Activated naive CD4-positive, alpha-beta T cell treated with anti-CD3 and anti-CD28 coated beads, Interleukin-2, amount 10 ng/mL, durations not matched to agents 7 days and 5 days (primary cell): ENCODE measurements at regions of chr17 and their contacts with region 1.

Region 1: DNA sequence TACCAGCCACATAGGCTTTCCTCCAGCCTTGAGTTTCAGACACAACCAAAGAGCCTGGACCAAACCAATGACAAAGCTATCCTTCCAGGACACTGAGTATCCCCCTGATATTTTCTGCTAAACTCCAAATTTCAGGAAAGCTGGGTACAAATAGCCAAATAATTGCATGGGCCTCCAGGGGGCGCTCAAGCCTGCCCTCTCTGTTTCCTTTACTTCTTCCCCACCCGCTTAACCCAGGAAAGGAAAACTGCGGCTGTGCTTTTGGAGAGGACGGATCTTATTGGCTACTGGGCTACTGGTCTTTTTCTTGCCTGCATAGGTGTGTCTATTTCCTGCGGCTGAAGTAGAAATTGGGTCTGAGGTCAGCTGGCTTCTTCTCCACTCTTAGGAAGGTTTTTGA is 30.1 kb downstream of the GNGT2 start:
- DNase-seq: peak; percentile 75
- H3K4me3 Mint-ChIP-seq: no peak overlapping the region
- H3K27ac Mint-ChIP-seq: no peak overlapping the region
- H3K4me1 Mint-ChIP-seq: peaks cover 9% of the 10 kb centered on the region
- H3K27me3 Mint-ChIP-seq: peaks cover 36% of the 10 kb centered on the region

Region 2: DNA sequence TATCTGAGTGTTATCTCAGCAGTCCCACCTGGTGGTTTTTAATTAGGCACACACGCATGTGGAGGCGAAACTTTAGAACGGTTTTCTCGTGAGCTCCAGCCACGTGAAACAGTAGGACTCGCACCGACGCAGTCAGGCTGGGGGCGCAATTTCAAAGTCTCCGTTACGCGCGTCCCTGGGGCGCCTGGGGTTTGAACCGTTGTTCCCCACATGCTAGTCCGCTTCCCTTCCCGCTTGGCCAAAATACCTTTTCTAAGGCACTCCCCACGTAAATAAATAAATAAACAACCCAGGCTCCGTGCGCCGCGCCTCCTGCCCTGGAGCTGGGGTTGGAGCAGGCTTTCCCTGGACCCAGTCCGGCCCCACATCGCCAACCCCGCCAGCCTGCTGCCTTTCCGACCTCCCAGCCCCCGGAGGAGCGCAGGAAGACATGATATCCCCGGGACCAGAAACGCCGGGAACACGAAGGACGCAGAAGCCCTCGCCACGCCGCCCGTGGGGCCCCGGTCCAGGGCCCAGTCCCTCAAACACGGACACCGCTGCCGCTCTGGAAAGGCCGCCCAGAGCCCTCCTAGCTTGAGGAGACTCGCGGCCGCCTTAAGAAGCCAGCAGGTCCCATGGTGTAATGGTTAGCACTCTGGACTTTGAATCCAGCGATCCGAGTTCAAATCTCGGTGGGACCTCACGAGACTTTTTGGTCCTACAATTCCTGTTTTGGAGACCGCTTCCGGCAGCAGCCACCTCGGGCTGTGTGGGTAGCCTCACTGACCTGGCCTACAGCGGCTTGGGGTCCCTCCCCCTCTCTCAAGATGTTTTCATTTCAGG is 11.8 kb after region 1 on chr17:
- CTCF ChIA-PET with region 1: interaction called, 20 read pairs
- DNase-seq: peak; percentile 92
- H3K4me3 Mint-ChIP-seq: peak overlapping the region; percentile 84
- H3K27ac Mint-ChIP-seq: peak overlapping the region; percentile 100
- H3K4me1 Mint-ChIP-seq: peaks cover 54% of the 10 kb centered on the region
- H3K27me3 Mint-ChIP-seq: peaks cover 18% of the 10 kb centered on the region

Region 3: GRCh38 chr17:49290690-49291359 is 110.5 kb after region 1 on chr17:
- CTCF ChIA-PET with region 1: interaction called, 20 read pairs
- DNase-seq: peak; percentile 35
- H3K4me3 Mint-ChIP-seq: no peak overlapping the region
- H3K27ac Mint-ChIP-seq: no peak overlapping the region
- H3K4me1 Mint-ChIP-seq: no peaks in the 10 kb centered on the region
- H3K27me3 Mint-ChIP-seq: no peaks in the 10 kb centered on the region